RWPE1 (cell line): ENCODE measurements at regions of chr15 and their contacts with region 1.

Region 1: DNA sequence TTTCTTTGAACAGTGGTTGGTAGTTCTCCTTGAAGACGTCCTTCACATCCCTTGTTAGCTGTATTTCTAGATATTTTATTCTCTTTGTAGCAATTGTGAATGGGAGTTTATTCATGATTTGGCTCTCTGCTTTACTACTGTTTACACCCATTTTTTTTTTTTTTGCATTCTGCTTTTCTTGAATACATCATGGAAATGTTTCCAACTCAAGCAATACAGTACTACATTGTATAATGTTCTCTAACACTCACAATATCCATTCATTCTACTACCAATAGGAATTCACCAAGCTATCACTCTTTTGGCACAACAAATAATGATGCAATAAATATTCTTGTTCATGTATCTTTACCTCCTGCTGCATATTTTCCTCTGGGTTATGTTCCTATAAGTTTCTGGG is 801.7 kb downstream of the NTRK3 start:
- DNase-seq: no peak
- H3K27ac ChIP-seq: no peak overlapping the region
- CTCF ChIP-seq: no peak

Region 2: GRCh38 chr15:85892232-85892631 is 1562.6 kb before region 1 on chr15:
- CTCF ChIA-PET with region 1: no interaction called
- POLR2A ChIA-PET with region 1: interaction called, 12 read pairs
- DNase-seq: no peak
- H3K27ac ChIP-seq: no peak overlapping the region
- CTCF ChIP-seq: no peak

Region 3: GRCh38 chr15:87498560-87498959 is 43.7 kb after region 1 on chr15:
- CTCF ChIA-PET with region 1: no interaction called
- POLR2A ChIA-PET with region 1: no interaction called
- DNase-seq: no peak
- H3K27ac ChIP-seq: no peak overlapping the region
- CTCF ChIP-seq: no peak